Pancreas (tissue), 10 donors: ENCODE measurements at regions of chr9 and their contacts with region 1.

Region 1: DNA sequence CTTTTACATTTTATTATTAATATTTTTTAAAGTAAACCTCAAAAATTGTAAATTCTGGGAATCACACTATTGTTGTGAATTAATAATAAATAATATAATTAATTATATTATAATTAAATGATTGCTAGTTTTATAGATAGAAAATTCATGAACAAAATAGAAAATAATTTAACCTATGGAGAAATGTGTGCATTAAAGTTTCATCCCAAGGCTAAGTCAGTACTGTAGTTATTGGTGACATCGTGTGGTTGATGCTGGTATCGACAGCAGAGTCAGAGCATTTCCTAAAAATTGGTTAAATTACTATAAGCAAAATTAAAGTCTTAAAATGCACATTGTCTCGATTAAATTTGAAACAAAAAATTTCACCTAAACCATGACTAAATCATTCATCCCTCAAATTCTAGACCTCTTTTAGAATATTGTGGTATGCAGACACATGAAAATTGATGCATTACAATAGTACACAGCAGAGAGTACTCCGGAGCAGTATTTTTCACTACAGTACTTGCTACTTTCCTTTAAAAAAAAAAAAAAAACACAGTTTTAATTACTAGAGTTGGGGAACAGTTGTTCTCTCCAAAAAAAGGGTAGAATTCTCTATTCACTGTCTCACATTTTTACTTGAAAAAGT is 73.9 kb downstream of the RORB start:
- DNase-seq: no peak
- ATAC-seq: peak in 3 of 4 donors; percentile 60
- H3K4me3 ChIP-seq: no peak overlapping the region
- H3K27ac ChIP-seq: no peak overlapping the region
- H3K4me1 ChIP-seq: no peaks in the 10 kb centered on the region
- H3K27me3 ChIP-seq: no peaks in the 10 kb centered on the region
- CTCF ChIP-seq: peak; percentile 7 to 76 (median 53)

Region 2: GRCh38 chr9:73200694-73201452 is 1370.1 kb before region 1 on chr9:
- intact Hi-C with region 1: loop called in 1 of 3 experiments (anchors 10 kb)
- DNase-seq: no peak
- ATAC-seq: peak in 3 of 4 donors; percentile 64 to 73 (median 65)
- H3K4me3 ChIP-seq: no peak overlapping the region
- H3K27ac ChIP-seq: no peak overlapping the region
- H3K4me1 ChIP-seq: no peaks in the 10 kb centered on the region
- H3K27me3 ChIP-seq: no peaks in the 10 kb centered on the region
- CTCF ChIP-seq: peak; percentile 25 to 42 (median 30)

Region 3: DNA sequence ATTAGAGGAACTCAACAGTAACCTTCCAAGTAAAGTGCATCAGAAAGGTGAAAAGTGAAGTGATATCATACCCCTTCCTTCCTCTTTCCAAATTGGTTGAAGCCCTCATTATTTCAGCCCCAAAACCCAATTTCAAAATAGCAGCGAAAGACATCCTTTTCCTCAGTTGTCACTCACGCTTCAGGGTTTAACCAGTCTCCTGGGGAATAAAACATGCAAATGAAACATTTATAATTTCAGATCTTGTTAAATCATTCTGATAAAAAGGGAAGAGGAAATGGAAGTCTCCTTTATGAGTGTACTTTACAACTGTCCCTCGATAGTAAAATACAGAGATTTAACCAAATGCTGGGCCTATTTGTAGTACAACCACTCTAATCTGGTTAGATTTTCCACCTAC is 294.2 kb after region 1 on chr9:
- intact Hi-C with region 1: no loop called
- DNase-seq: no peak
- ATAC-seq: no peak
- H3K4me3 ChIP-seq: no peak overlapping the region
- H3K27ac ChIP-seq: no peak overlapping the region
- H3K4me1 ChIP-seq: peaks cover 0 to 4% (median 0%) of the 10 kb centered on the region in 3 donors
- H3K27me3 ChIP-seq: no peaks in the 10 kb centered on the region
- CTCF ChIP-seq: no peak